Ascending aorta (tissue), 2 donors: ENCODE measurements at regions of chr5 and their contacts with region 1.

Region 1: GRCh38 chr5:9544502-9545135 is 1.3 kb downstream of the SEMA5A start:
- DNase-seq: peak in 1 of 2 donors; percentile 91
- H3K4me3 ChIP-seq: peak overlapping the region; percentile 65 to 95
- H3K27ac ChIP-seq: peak overlapping the region; percentile 96
- H3K4me1 ChIP-seq: peaks cover 0 to 15% of the 10 kb centered on the region in 2 donors
- H3K27me3 ChIP-seq: no peaks in the 10 kb centered on the region
- CTCF ChIP-seq: peak; percentile 77 to 95 (median 90)

Region 2: DNA sequence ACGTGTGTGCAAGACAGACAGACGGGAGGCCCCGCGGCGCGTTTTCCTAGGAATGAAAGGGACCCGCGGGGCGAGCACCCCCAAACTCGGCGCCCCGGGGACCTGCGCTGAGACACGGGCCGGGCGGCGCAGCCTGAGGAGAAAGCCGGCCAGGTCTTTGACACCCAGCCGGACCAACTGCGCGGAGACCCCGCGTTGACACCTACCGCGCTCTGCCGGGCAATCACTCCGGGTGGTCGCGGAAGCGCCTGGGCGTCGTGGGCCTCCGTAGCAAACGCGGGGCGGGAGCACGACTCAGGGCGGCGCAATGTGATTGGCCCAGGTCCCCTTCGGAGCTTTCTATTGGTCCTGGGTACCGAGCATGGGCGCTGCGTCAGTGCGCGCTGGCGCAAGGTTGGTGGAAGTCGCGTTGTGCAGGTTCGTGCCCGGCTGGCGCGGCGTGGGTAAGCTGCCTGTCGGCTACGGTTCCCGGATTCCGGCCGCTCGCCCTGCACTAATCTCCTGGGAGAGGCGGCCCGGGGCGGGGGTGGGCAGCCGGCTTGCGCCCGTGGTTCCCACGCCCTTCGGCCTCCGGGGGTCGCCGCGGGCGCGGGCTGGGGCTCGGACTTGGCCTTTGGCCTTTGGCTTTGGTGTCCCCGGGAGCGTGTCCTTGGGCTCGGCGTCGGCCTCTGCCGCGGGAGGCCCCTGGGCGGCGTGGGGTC is 1675.7 kb before region 1 on chr5 and contains the starts of genes FASTKD3 and MTRR:
- intact Hi-C with region 1: loop called (anchors 5 kb)
- DNase-seq: peak; percentile 70 to 95
- H3K4me3 ChIP-seq: peak within 1 kb of the TSS; percentile 51 to 95
- H3K27ac ChIP-seq: peak within 1 kb of the TSS; percentile 56 to 85
- H3K4me1 ChIP-seq: peaks cover 0 to 6% of the 10 kb centered on the region in 2 donors
- H3K27me3 ChIP-seq: no peaks in the 10 kb centered on the region
- CTCF ChIP-seq: no peak
- total RNA-seq, gene FASTKD3: not detected
- total RNA-seq, gene MTRR: 15.0 TPM

Region 3: GRCh38 chr5:9015260-9015936 is 529.2 kb before region 1 on chr5:
- intact Hi-C with region 1: loop called (anchors 10 kb)
- DNase-seq: no peak
- H3K4me3 ChIP-seq: no peak overlapping the region
- H3K27ac ChIP-seq: no peak overlapping the region
- H3K4me1 ChIP-seq: peaks cover 0 to 8% of the 10 kb centered on the region in 2 donors
- H3K27me3 ChIP-seq: no peaks in the 10 kb centered on the region
- CTCF ChIP-seq: no peak

Region 4: GRCh38 chr5:9156282-9156681 is 388.3 kb before region 1 on chr5:
- intact Hi-C with region 1: loop called (anchors 1 kb)
- DNase-seq: peak in 1 of 2 donors; percentile 72
- H3K4me3 ChIP-seq: no peak overlapping the region
- H3K27ac ChIP-seq: no peak overlapping the region
- H3K4me1 ChIP-seq: no peaks in the 10 kb centered on the region
- H3K27me3 ChIP-seq: no peaks in the 10 kb centered on the region
- CTCF ChIP-seq: peak in 2 of 3 experiments; percentile 39 to 51

Region 5: DNA sequence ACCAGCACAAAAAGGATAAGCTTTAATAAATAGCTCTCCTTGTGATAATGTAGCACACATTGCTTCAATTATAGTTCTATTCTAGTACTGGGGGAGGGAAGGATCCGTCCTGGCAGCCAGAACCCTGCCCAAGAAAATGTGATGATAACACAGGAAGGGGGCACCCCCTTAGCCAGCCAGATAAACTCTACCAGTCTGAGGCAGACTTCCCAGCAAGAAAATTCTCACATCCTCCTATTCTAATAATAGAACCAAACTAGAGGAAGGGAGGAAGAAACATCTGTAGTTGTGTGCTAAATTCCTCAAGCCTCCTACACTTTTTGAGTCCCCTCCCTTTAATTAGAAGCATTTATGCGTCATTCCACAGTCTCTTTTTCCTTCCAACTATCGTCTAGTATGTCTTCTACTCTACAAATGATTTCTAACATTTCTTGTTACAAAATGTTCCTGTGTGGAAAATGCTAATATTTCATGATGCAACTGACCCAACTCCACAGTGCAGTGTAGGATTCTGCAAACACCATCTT is 259.8 kb before region 1 on chr5:
- intact Hi-C with region 1: loop called (anchors 2 kb)
- DNase-seq: peak in 1 of 2 donors; percentile 73
- H3K4me3 ChIP-seq: peak overlapping the region in 1 of 2 donors; percentile 10
- H3K27ac ChIP-seq: peak overlapping the region; percentile 83 to 84
- H3K4me1 ChIP-seq: peaks cover 0 to 18% of the 10 kb centered on the region in 2 donors
- H3K27me3 ChIP-seq: no peaks in the 10 kb centered on the region
- CTCF ChIP-seq: no peak

Region 6: GRCh38 chr5:10249948-10250803 is 705.6 kb after region 1 on chr5 and contains the start of gene CCT5:
- intact Hi-C with region 1: loop called (anchors 5 kb)
- DNase-seq: peak; percentile 69 to 97
- H3K4me3 ChIP-seq: peak within 1 kb of the TSS; percentile 69 to 88
- H3K27ac ChIP-seq: peak within 1 kb of the TSS; percentile 88
- H3K4me1 ChIP-seq: peaks cover 10 to 16% of the 10 kb centered on the region in 2 donors
- H3K27me3 ChIP-seq: no peaks in the 10 kb centered on the region
- CTCF ChIP-seq: no peak
- total RNA-seq, gene CCT5: 66.1 TPM